Activated CD4-positive, alpha-beta memory T cell treated with anti-CD3 and anti-CD28 coated beads, Interleukin-2, amount 10 ng/mL, durations not matched to agents 7 days and 5 days (primary cell): ENCODE measurements at regions of chr1 and their contacts with region 1.

Region 1: DNA sequence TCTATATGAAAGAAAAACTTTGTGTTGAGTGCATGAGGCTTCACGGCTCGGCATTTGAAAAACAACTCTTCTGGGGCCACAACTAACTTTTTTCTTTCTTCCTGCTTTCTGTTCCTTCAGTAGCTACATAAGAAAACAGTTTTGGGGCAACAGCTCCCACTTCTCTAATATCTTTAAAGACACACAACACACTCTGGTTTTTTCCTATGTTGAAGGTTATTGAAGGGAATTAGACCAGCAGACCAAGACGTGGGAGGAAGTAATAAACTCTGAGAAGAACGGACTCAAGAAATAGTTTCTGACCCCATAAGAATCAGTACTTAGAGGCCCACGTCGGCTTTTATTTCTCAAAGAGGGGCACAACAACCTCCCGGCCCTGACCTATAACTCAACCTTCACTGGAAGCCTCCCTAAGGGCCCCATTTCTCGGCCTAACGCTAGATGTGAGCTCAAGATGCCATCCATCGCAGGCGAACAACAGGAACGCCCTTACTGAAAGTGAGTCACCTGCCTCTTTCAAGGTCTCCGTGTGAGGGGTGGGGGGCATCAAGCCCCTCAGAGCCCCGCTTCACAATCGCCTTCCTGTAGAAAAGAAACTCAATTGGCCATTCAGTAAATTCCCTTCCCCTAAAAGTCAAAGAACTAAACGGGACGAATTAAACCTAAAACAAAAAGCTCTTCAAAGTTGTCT is 844 bp downstream of the ZMYM6 start:
- DNase-seq: peak; percentile 46
- H3K4me3 Mint-ChIP-seq: peak overlapping the region; percentile 99
- H3K27ac Mint-ChIP-seq: peak overlapping the region; percentile 87
- H3K4me1 Mint-ChIP-seq: peaks cover 29% of the 10 kb centered on the region
- H3K27me3 Mint-ChIP-seq: peaks cover 3% of the 10 kb centered on the region

Region 2: GRCh38 chr1:35047188-35047858 is 16.4 kb after region 1 on chr1:
- CTCF ChIA-PET with region 1: no interaction called
- POLR2A ChIA-PET with region 1: no interaction called
- DNase-seq: no peak
- H3K4me3 Mint-ChIP-seq: no peak overlapping the region
- H3K27ac Mint-ChIP-seq: no peak overlapping the region
- H3K4me1 Mint-ChIP-seq: no peaks in the 10 kb centered on the region
- H3K27me3 Mint-ChIP-seq: peaks cover 3% of the 10 kb centered on the region

Region 3: DNA sequence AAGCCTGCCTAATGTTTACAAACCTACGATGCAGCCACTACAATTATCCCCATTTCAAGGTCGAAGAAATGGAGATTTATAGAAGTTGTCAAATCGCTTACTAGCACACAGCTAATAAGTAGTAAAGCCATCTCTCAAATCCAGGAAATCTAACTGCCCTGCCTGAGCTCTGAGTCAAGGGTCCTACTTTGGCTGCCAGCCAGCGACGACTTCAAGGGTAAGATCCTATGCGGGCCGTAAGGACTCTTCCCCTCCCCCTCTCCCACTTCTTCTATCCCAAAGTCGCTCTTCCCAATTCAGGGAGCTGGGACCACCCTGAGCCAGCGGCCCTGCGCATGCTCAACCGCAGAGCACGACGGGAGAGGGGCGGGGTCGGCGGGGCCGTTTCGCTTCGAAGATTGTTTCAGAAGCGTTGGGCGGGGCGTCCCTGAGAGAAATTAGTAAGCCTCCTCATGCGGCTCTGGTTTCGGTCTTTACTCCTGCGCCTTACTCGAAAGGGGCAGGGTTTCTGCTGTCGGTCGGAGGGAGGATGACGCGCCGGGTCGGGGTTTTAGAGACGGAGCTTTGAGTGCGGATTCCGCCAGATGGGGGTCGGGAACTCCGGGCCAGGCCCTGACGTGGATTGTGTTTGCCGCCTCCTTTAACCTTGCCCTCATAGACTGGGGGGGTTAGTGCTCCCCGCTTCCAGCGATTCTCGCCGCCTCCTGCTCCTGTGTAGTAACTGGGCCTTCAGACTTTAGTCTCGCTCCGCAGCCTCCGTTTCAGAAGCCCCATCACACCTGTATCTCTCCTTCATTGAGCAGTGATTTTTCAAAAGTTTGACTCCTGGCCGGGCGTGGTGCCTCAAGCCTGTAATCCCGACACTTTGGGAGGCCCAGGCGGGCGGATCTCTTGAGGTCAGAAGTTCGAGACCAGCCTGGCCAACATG is 48.4 kb after region 1 on chr1 and contains the start of gene ZMYM1:
- CTCF ChIA-PET with region 1: no interaction called
- POLR2A ChIA-PET with region 1: interaction called, 24 read pairs
- DNase-seq: peak; percentile 87
- H3K4me3 Mint-ChIP-seq: peak within 1 kb of the TSS; percentile 99
- H3K27ac Mint-ChIP-seq: peak within 1 kb of the TSS; percentile 99
- H3K4me1 Mint-ChIP-seq: peaks cover 41% of the 10 kb centered on the region
- H3K27me3 Mint-ChIP-seq: no peaks in the 10 kb centered on the region
- total RNA-seq, gene ZMYM1: 9.7 to 11.7 TPM

Region 4: GRCh38 chr1:35192853-35193664 is 162.2 kb after region 1 on chr1 and contains the start of gene SFPQ:
- CTCF ChIA-PET with region 1: no interaction called
- POLR2A ChIA-PET with region 1: interaction called, 12 read pairs
- DNase-seq: peak; percentile 97
- H3K4me3 Mint-ChIP-seq: peak within 1 kb of the TSS; percentile 94
- H3K27ac Mint-ChIP-seq: peak within 1 kb of the TSS; percentile 99
- H3K4me1 Mint-ChIP-seq: peaks cover 44% of the 10 kb centered on the region
- H3K27me3 Mint-ChIP-seq: peaks cover 2% of the 10 kb centered on the region
- total RNA-seq, gene SFPQ: 319 to 328 TPM